GM12878 (cell line): ENCODE measurements at regions of chr5 and their contacts with region 1.

Region 1: DNA sequence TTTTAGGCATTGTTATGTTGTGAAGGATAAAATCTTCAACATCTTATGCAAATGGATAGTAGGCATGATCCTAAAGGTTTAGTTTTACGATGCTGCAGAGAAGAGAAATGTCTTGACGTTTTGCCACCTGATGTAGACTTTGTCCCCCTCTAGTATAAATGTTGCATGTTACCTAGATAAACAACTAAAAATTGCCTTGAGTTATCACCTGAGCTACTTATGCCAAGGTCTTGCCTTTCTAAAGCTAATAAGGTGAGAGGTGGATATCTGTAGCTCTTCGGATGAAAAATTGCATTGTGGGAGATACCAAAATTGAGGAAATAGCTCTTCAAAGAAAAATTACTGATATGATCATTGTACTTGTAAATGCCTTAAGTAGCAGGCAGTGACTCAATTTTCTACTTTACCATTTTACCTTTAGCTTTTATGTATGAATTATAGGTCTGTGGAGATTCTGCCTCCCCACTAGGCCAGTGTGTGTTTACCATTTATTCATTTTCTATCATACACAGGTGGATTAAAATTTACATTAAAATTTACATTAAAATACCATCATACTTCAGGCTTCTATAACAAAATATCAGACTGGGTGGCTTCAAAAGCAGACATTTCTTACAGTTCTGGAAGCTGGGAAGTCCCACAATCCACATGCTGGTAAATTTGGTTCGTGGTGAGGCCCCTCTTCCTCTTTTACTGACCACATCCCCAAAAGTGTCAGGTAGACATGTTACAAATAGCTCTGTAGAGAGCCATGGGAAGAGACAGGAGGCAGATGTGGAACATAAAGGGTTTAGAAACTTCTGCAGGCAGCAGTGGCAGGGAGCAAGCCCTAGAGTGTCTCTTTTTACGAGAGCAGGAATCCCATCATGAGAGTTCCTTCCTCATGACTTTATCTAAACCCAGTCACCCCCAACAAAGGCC is 100.7 kb upstream of the ERBIN start:
- DNase-seq: peak; percentile 77
- ATAC-seq: peak; percentile 87
- H3K4me3 ChIP-seq: peak overlapping the region; percentile 29; the same call in 1 of the 2 replicates
- H3K27ac ChIP-seq: peak overlapping the region; percentile 64
- H3K4me1 ChIP-seq: peaks cover 47% of the 10 kb centered on the region
- H3K27me3 ChIP-seq: no peaks in the 10 kb centered on the region
- CTCF ChIP-seq: no peak
- EP300 ChIP-seq: peak; percentile 65 to 80; a peak in 3 of 4 replicates
- POLR2A ChIP-seq: no peak
- RAD21 ChIP-seq: 0 out of 2 replicates have a peak, but pooled peaks have one; percentile 34

Region 2: DNA sequence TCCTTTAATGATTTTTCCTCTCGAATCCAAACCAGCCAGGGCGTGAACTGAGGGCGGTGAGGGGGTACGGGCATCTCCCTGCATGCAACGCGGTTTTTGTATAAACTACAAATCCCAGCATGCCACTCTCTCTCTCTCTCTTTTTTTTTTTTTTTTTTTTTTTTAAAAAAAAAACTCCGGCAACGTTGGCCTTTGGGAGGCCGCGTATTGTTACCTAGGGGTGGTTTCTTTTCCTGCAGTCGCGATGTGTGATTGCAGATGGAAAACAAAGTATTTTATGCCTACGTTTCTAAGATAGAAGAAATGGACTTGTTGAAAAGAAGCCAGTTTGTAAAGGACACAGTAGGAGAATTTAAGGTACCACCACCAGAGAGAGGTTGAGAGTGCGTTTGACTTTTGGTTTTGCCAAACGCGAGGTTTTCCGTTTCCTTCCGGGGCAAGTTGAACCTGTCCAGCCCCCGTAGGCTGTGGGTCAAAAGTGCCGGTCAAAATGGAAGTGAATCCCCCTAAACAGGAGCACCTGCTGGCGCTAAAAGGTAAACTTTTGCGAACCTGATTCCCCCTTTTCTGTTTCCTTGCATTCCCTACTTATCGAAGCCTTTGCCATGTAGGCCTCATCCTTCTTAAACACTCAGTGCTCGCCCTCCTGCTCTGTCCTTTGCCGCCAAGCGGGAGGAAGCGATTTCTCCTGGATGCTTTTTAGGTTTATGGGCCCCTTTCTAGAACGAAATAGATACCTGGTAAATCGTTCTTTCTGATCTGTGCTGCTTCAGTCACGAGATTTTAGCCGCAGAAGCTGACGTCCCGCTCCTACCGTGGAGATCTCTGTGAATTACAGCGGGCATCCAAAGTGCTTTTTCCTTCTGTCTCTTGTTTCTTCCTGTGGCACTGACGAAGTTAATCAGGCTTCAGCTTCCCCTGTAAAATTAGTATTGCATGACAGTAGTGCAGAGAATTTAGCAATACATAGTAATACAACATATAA is 200.8 kb before region 1 on chr5 and contains the starts of genes SHLD3 and TRAPPC13:
- CTCF ChIA-PET with region 1: no interaction called
- POLR2A ChIA-PET with region 1: no interaction called
- RAD21 ChIA-PET with region 1: no interaction called
- SMC1A ChIA-PET with region 1: no interaction called
- in situ Hi-C with region 1: no loop called
- intact Hi-C with region 1: no loop called
- DNase-seq: peak; percentile 85
- ATAC-seq: peak; percentile 84
- H3K4me3 ChIP-seq: peak within 1 kb of the TSS; percentile 88
- H3K27ac ChIP-seq: peak within 1 kb of the TSS; percentile 83
- H3K4me1 ChIP-seq: no peaks in the 10 kb centered on the region
- H3K27me3 ChIP-seq: no peaks in the 10 kb centered on the region
- CTCF ChIP-seq: 0 out of 6 replicates have a peak, but pooled peaks of 1 of the 3 experiments have one; percentile 6
- EP300 ChIP-seq: no peak
- POLR2A ChIP-seq: peak; percentile 60
- RAD21 ChIP-seq: no peak
- polyA plus RNA-seq, gene SHLD3: 5.7 to 9.2 TPM
- polyA plus RNA-seq, gene TRAPPC13: 23.7 to 35.6 TPM

Region 3: GRCh38 chr5:65721720-65722574 is 103.7 kb before region 1 on chr5 and contains the starts of genes NLN and SGTB:
- CTCF ChIA-PET with region 1: no interaction called
- POLR2A ChIA-PET with region 1: interaction called, 4 read pairs
- RAD21 ChIA-PET with region 1: no interaction called
- SMC1A ChIA-PET with region 1: interaction called, 4 read pairs
- in situ Hi-C with region 1: no loop called
- intact Hi-C with region 1: loop called (anchors 5 kb)
- DNase-seq: no peak
- ATAC-seq: peak; percentile 93
- H3K4me3 ChIP-seq: peak within 1 kb of the TSS; percentile 91
- H3K27ac ChIP-seq: peak within 1 kb of the TSS; percentile 78
- H3K4me1 ChIP-seq: 0 out of 2 replicates have a peak, but pooled peaks cover 4% of the 10 kb centered on the region
- H3K27me3 ChIP-seq: no peaks in the 10 kb centered on the region
- CTCF ChIP-seq: no peak
- EP300 ChIP-seq: no peak
- POLR2A ChIP-seq: peak; percentile 83
- RAD21 ChIP-seq: no peak
- polyA plus RNA-seq, gene NLN: 6.8 to 9.2 TPM
- polyA plus RNA-seq, gene SGTB: 1.0 to 1.4 TPM

Region 4: GRCh38 chr5:66144074-66144833 is 318.6 kb after region 1 on chr5 and contains the start of gene SREK1:
- CTCF ChIA-PET with region 1: no interaction called
- POLR2A ChIA-PET with region 1: no interaction called
- RAD21 ChIA-PET with region 1: interaction called, 5 read pairs
- SMC1A ChIA-PET with region 1: no interaction called
- in situ Hi-C with region 1: no loop called
- intact Hi-C with region 1: loop called (anchors 10 kb)
- DNase-seq: peak; percentile 63
- ATAC-seq: peak; percentile 94
- H3K4me3 ChIP-seq: peak within 1 kb of the TSS; percentile 90
- H3K27ac ChIP-seq: peak within 1 kb of the TSS; percentile 94
- H3K4me1 ChIP-seq: peaks cover 4% of the 10 kb centered on the region; the same call in 1 of the 2 replicates
- H3K27me3 ChIP-seq: no peaks in the 10 kb centered on the region
- CTCF ChIP-seq: no peak
- EP300 ChIP-seq: peak in 1 of 2 experiments; percentile 17; a peak in 1 of 4 replicates
- POLR2A ChIP-seq: peak; percentile 96
- RAD21 ChIP-seq: no peak
- polyA plus RNA-seq, gene SREK1: 30.7 to 31.6 TPM